ENCODE measurements at regions of chr3 and their contacts with region 1.

Region 1: GRCh38 chr3:44208086-44208485 is 33.6 kb upstream of the TOPAZ1 start:
- DNase-seq: no peak
- ATAC-seq: no peak
- H3K4me3 ChIP-seq: no peak overlapping the region
- H3K27ac ChIP-seq: no peak overlapping the region
- H3K4me1 ChIP-seq: no peaks in the 10 kb centered on the region
- H3K27me3 ChIP-seq: no peaks in the 10 kb centered on the region
- CTCF ChIP-seq: no peak
- POLR2A ChIP-seq: no peak

Region 2: GRCh38 chr3:43540624-43541023 is 667.5 kb before region 1 on chr3:
- intact Hi-C with region 1: loop called (anchors 10 kb)
- DNase-seq: no peak
- ATAC-seq: no peak
- H3K4me3 ChIP-seq: no peak overlapping the region
- H3K27ac ChIP-seq: no peak overlapping the region
- H3K4me1 ChIP-seq: no peaks in the 10 kb centered on the region
- H3K27me3 ChIP-seq: no peaks in the 10 kb centered on the region
- CTCF ChIP-seq: no peak
- POLR2A ChIP-seq: no peak

Region 3: GRCh38 chr3:43855674-43856299 is 352.3 kb before region 1 on chr3:
- intact Hi-C with region 1: loop called (anchors 10 kb)
- DNase-seq: peak; percentile 58 to 67 (median 64)
- ATAC-seq: peak; percentile 77
- H3K4me3 ChIP-seq: no peak overlapping the region
- H3K27ac ChIP-seq: no peak overlapping the region
- H3K4me1 ChIP-seq: no peaks in the 10 kb centered on the region
- H3K27me3 ChIP-seq: no peaks in the 10 kb centered on the region
- CTCF ChIP-seq: peak; percentile 28 to 60 (median 54)
- POLR2A ChIP-seq: no peak

Region 4: DNA sequence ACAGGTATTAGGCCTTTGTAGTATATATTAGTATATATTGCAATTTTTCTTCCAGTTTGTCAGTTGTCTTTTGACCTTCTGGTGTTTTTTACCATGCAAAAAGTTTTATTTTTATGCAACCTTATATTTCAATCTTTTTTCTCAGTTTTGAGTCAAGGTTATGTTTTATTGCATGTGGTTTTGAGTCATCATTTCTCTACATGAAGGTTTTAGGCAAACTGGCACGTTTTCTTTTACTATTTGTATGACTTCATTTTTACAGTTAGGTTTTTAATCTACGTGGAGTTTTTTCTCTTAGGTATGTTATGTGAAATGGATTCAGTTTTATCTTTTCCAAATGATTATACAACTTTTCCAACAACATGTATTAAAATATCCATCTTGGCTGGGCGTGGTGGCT is 93.7 kb after region 1 on chr3:
- intact Hi-C with region 1: no loop called
- DNase-seq: no peak
- ATAC-seq: no peak
- H3K4me3 ChIP-seq: no peak overlapping the region
- H3K27ac ChIP-seq: no peak overlapping the region
- H3K4me1 ChIP-seq: no peaks in the 10 kb centered on the region
- H3K27me3 ChIP-seq: no peaks in the 10 kb centered on the region
- CTCF ChIP-seq: no peak
- POLR2A ChIP-seq: no peak